Activated CD4-positive, alpha-beta T cell treated with anti-CD3 and anti-CD28 coated beads, Interleukin-2, amount 10 ng/mL, durations not matched to agents 24 days and 14 days (primary cell): ENCODE measurements at regions of chr1 and their contacts with region 1.

Region 1: DNA sequence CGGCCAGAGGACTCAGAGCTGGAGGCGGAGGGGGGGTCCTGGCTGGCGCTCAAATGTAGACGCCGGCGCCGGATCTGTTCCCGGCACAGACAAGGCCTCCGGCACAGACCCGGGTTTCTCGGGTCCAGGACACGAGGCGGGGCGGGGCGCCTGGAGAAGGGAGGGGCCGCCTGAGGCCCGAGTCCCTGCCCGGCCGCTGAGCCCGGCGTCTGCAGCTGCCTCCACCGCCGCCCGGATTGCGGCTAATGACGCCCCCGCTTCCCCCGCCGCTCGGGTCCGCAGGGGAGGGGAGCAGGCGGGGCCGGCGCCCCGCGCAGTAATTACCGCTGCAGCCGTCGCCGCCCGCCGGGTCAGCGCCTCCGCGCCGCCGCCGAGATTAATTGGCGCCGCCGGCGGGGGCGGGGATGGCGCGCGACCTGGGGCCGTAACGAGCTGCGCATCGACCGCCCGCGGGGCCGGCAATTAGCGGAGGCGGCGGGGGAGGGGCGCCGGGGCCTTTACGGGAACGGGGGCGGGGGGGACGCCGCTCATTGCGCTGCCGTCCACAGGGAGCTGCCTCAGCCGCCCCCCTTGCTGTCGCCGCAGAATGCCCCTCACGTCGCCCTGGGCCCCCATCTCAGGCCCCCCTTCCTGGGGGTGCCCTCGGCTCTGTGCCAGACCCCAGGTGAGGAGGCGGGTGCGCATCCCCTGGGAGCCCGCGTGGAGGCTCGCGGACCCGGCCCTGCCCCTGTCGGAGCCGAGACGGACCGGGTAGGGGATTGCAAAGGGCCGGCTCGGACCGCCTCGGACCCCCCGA is 17.3 kb downstream of the NOC2L start:
- DNase-seq: peak; percentile 74
- H3K4me3 Mint-ChIP-seq: peak overlapping the region; percentile 74
- H3K27ac Mint-ChIP-seq: no peak overlapping the region
- H3K4me1 Mint-ChIP-seq: peaks cover 7% of the 10 kb centered on the region
- H3K27me3 Mint-ChIP-seq: peaks cover 29% of the 10 kb centered on the region

Region 2: DNA sequence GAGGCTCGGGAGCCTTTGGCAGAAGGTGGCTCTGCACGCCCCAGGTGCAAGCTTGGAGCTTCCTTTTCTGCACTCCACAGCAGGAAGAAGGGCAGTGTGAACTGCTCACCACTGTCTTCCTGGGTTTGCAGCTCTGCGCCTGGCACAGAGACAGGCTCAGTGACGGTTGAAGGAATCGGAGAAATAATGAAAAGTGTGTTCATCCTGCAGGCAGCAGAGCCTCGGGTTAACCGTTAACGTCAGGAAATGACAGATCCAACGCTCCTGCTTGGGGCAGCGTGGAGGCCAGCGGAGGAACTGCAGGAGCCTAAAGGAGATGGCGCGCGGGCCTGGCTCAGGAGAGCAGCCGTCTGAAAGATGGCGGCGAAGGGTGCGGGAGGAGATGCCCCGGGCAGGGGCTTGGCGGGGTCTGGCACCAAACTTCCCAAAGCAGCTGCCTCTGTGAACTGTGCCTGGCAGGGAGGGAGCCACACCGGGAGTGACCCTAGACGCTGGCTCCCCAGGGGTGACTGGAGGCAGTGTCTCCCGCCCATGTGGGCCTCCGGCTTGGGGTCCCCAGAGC is 29.0 kb before region 1 on chr1:
- intact Hi-C with region 1: no loop called
- DNase-seq: no peak
- H3K4me3 Mint-ChIP-seq: no peak overlapping the region
- H3K27ac Mint-ChIP-seq: no peak overlapping the region
- H3K4me1 Mint-ChIP-seq: peaks cover 6% of the 10 kb centered on the region
- H3K27me3 Mint-ChIP-seq: peaks cover 25% of the 10 kb centered on the region

Region 3: GRCh38 chr1:923131-923990 is 18.4 kb before region 1 on chr1 and contains the start of gene SAMD11:
- intact Hi-C with region 1: loop called (anchors 2 kb)
- DNase-seq: peak; percentile 85
- H3K4me3 Mint-ChIP-seq: peak within 1 kb of the TSS; percentile 64
- H3K27ac Mint-ChIP-seq: peak within 1 kb of the TSS; percentile 29
- H3K4me1 Mint-ChIP-seq: peaks cover 9% of the 10 kb centered on the region
- H3K27me3 Mint-ChIP-seq: peaks cover 49% of the 10 kb centered on the region
- total RNA-seq, gene SAMD11: not detected in 2 replicates

Region 4: GRCh38 chr1:1098681-1099421 is 157.1 kb after region 1 on chr1:
- intact Hi-C with region 1: no loop called
- DNase-seq: no peak
- H3K4me3 Mint-ChIP-seq: peak overlapping the region; percentile 0
- H3K27ac Mint-ChIP-seq: peak overlapping the region; percentile 64
- H3K4me1 Mint-ChIP-seq: peaks cover 16% of the 10 kb centered on the region
- H3K27me3 Mint-ChIP-seq: peaks cover 9% of the 10 kb centered on the region